GM10248 (cell line): ENCODE measurements at regions of chr10 and their contacts with region 1.

Region 1: DNA sequence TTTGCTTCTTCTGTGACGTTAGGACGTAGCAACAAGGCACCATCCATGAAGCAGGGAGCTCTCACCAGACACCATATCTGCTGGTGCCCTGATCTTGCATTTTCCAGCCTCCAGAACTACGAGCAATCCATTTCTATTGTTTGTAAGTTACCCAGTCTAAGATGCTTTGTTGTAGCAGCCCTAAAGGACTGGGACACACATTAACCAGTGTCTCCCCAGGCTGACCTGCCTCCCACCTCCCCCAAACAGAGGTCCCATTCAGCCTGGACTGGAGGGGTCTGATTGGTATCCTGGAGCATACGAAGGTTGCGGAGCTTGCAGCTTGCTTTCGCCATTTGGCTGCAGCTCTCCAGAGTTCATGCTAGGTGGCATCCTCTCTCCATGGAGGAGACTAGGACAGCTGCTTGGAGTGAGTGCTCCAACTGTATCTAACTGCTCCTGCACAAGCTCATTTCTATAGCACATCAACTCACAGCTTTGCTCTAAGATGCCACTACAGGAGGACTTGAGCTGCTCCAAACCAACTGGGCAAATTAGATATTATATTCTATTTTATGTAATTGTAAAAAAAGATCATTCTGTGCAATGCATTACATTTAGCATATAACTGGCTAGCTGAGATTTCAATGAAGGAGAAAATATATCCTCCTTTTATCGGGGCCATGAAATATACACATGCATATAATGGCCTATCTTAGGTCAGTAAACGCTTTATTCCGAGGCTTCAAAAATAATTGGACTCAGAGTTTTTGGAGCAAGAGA is 8.0 kb upstream of the GRK5 start:
- DNase-seq: peak; percentile 54
- CTCF ChIP-seq: peak; percentile 73

Region 2: DNA sequence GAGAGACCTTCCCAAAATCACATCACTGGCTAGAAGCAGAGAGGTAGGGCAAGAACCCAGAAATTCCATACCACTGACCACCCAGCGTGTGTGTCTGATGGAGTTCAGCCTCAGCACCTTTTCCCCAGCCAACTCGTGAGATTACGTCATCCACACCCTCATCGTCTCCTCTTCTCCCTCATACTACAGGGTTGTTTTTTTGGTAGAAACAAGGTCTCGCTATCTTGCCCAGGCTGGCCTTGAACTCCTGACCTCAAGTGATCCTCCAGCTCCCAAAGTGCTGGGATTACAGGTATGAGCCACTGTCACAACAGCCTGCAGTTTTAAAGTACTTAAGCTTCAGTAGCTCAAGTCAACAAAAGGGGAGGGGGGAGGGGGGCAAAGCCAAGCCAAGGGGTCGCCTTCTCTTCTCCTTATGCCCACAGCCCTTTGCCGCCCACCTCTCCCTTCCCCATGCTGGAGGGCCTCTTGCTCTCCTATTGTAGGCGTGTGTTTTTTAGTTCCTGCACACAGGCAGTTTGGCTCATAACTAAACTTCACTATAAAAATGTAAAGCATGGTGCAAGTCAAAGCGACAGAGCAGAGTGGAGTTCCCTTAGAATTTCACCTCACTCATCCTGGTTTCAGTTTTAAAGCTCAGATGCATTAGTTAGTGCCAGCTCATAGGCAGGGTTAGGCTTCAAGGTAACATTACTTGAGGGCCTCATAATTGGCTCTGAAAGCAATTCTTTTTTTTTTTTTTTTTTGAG is 15.6 kb before region 1 on chr10:
- CTCF ChIA-PET with region 1: interaction called, 211 read pairs
- POLR2A ChIA-PET with region 1: no interaction called
- DNase-seq: no peak
- CTCF ChIP-seq: no peak

Region 3: GRCh38 chr10:119407254-119407777 is 207.9 kb after region 1 on chr10:
- CTCF ChIA-PET with region 1: interaction called, 14 read pairs
- POLR2A ChIA-PET with region 1: no interaction called
- DNase-seq: peak; percentile 69
- CTCF ChIP-seq: no peak

Region 4: GRCh38 chr10:119416855-119417254 is 217.4 kb after region 1 on chr10:
- CTCF ChIA-PET with region 1: interaction called, 39 read pairs
- POLR2A ChIA-PET with region 1: no interaction called
- DNase-seq: peak; percentile 91
- CTCF ChIP-seq: peak; percentile 80

Region 5: DNA sequence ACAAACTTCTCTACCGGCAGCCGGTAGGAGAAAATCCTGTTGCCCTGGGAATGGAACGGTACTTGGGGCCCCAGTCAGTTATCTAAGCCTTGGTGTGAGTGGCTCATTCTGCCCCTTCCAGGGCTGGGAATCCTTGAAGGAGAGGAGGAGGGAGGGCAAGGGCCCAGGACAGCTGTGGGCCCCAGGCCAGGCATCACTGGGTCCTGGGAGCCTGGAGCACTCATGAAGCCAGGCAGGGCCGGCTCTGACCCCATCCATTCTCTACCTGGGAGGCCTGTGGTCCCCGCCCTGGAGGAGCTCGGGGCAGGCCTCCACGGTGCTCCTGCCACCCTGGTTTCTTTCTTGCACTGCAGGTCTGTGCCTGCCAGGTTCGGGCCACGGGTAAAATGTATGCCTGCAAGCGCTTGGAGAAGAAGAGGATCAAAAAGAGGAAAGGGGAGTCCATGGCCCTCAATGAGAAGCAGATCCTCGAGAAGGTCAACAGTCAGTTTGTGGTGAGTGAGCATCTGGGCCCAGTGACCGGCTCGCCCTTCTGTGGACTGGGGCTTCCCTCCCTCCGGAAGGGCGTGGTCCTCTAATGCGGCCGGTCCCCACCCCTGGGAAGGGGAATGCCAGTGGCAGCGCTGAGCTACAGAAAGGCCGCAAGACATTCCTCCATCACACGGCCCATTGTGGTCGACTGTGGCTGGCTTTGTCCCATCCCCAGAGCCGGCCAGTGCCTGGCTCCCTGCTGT is 231.8 kb after region 1 on chr10:
- CTCF ChIA-PET with region 1: interaction called, 17 read pairs
- POLR2A ChIA-PET with region 1: no interaction called
- DNase-seq: no peak
- CTCF ChIP-seq: no peak

Region 6: DNA sequence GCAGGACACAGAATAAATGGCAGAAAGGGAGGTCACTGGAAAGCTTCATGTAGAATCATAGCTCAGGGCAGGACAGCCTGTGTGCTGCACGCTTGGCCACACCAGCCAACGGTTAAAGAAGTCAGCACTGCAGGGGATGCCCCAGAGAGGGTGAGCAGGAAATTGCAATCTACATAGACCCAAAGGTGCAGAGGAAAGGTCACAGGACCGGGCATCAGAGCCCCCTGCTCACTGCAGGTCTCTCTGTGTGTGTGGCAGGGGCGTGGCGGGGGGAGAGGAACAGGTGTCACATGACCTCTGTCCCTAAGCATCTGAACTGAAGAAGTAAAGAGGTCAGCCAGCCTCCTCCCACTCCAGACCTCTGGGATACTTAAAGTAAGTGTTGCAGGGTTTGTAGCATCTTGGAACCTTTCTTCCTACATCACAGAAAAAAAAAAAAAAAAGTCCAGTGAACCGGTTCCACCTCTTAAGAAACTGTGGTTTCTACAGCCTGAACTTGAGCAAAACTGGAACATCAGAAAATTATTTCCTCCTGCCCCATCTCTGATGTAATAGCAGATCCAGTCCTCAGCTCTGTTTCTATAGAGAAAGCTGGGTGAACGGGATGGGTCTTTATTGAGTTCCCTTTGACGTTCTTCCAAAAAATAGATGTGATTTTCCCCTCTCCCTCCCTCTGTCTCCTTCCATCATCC is 278.8 kb after region 1 on chr10:
- CTCF ChIA-PET with region 1: interaction called, 10 read pairs
- POLR2A ChIA-PET with region 1: no interaction called
- DNase-seq: peak; percentile 59
- CTCF ChIP-seq: peak; percentile 3

Region 7: DNA sequence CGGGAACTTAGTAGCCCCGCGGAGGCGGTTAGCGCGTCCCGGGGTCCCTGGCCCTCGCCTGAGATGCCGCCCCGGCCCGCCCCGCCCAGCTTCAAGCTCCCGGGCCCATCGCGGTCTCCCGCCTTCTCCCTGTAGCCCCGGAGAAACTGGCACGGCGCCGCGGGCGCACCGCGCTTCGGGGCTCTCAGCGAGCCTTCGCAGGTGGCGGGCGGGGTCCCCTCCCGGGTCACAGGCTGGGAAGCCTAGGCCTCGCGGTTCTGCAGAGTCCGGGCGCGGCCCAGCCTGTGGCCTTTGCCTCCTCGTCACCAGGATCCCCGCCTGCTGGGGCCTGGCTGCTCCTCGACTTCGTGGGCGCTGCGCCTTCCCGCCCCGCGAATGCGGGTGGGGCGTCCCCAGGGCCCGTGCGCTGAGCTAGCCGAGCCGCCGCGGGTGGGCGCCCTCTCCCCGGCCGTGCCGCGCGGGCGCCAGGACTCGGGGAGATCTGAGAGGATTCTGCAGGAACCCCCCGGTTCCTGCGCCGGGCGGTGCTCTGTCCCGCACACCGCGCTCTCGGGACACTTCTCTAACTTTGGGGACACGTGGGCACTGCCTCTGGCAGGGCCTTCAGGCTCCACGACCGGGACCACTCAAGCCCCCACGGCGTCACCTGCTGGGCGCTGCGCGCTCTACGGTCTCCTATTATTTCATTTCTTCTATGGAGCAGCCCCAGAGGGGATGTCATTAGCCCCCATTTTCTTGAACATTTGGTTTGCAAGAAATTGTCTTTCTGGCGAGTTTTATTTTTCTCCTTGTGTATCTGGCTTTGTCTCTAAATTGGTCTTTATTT is 343.8 kb after region 1 on chr10:
- CTCF ChIA-PET with region 1: interaction called, 25 read pairs
- POLR2A ChIA-PET with region 1: no interaction called
- DNase-seq: peak; percentile 76
- CTCF ChIP-seq: peak; percentile 74